B cell (primary cell): ENCODE measurements at regions of chr15 and their contacts with region 1.

Region 1: DNA sequence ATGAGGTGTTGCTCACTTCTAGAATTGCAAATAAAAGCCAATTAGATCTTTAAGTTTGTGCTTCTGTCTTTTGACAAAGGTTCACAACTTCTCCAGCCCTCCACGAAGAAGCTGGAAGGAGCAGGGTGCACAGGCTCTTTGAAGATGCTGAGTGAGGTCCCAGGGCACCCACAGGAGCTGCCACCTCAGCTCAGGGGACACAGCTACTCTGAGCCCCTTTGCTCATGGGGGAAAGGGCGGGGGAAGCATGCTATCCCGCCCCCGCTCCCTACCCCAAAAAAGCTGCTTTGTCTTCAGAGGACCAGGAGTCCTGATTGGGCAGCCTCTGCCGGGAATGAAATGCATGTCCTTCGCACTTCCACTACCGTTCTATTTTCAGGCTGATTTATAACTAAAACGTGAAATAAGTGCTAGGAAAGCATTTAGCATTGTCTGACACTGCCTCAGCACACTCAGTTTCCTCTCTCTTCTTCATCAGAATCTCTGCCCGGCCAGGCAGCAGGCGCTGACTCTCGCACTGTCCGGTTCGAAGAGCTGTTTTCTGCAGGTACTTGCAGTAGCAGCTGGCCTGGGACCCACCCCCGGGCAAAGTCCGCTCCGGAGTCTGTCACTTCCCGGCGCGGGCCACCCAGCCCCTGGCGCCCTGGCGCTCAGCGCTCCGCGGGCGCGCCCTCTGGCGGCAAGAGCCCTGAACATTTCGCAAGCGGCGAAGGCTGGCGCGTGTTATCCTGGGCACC is 45.5 kb upstream of the KLHL25 start:
- DNase-seq: peak; percentile 81
- ATAC-seq: peak; percentile 98
- H3K4me3 ChIP-seq: peak overlapping the region in 3 of 5 experiments; percentile 7 to 40 (median 25)
- H3K4me3 Mint-ChIP-seq: peak overlapping the region; percentile 74
- H3K27ac ChIP-seq: no peak overlapping the region
- H3K27ac Mint-ChIP-seq: no peak overlapping the region
- H3K4me1 ChIP-seq: peaks cover 4 to 9% of the 10 kb centered on the region in 2 donors
- H3K4me1 Mint-ChIP-seq: peaks cover 3% of the 10 kb centered on the region
- H3K27me3 ChIP-seq: peaks cover 0 to 10% (median 2%) of the 10 kb centered on the region in 4 experiments
- H3K27me3 Mint-ChIP-seq: peaks cover 12% of the 10 kb centered on the region
- CTCF ChIP-seq: peak; percentile 97

Region 2: DNA sequence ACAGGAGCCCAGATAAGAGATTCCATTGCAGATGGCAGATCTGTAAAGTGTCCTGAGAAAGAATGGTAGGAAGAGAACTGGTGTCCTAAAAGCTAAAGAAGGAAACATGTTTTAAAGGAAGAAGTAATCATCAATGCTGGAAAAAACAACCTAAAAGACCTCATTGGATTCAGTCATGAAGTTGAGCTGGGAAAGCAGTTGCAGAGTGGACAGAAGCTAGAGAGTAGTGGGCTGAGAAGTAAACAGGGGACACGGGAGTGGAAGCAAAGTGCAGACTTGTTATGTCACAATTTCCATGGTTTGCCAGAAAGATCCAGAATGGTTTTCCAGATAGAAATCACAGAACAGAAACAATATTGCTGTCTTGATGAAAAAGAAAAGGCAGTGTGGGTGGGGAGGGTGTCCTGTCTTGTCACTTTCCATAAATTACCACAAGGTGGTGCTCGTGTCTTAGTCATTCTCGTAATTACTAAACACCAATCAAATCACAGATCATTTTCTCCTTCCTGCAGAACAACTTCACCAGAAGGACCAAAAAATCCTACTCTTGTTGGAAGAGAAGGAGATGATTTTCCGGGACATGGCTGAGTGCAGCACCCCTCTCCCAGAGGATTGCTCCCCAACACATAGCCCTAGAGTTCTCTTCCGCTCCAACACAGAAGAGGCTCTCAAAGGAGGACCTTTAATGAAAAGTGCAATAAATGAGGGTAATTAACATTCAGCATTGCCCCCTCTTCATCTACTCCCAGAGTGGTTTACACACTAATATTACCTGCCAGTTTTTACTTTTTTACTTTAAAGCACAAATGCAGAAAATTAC is 110.0 kb before region 1 on chr15:
- CTCF ChIA-PET with region 1: interaction called, 114 read pairs
- POLR2A ChIA-PET with region 1: no interaction called
- intact Hi-C with region 1: loop called (anchors 1 kb)
- DNase-seq: peak; percentile 70
- ATAC-seq: peak; percentile 69
- H3K4me3 ChIP-seq: no peak overlapping the region
- H3K4me3 Mint-ChIP-seq: no peak overlapping the region
- H3K27ac ChIP-seq: peak overlapping the region in 1 of 2 donors; percentile 62
- H3K27ac Mint-ChIP-seq: peak overlapping the region; percentile 76
- H3K4me1 ChIP-seq: no peaks in the 10 kb centered on the region
- H3K4me1 Mint-ChIP-seq: peaks cover 3% of the 10 kb centered on the region
- H3K27me3 ChIP-seq: no peaks in the 10 kb centered on the region
- H3K27me3 Mint-ChIP-seq: no peaks in the 10 kb centered on the region
- CTCF ChIP-seq: peak; percentile 86

Region 3: GRCh38 chr15:85794603-85795336 is 45.5 kb before region 1 on chr15 and contains the start of gene KLHL25:
- CTCF ChIA-PET with region 1: no interaction called
- POLR2A ChIA-PET with region 1: no interaction called
- intact Hi-C with region 1: loop called (anchors 2 kb)
- DNase-seq: peak; percentile 94
- ATAC-seq: peak; percentile 98
- H3K4me3 ChIP-seq: peak within 1 kb of the TSS; percentile 47 to 79 (median 68)
- H3K4me3 Mint-ChIP-seq: peak within 1 kb of the TSS; percentile 91
- H3K27ac ChIP-seq: peak within 1 kb of the TSS in 1 of 2 donors; percentile 66
- H3K27ac Mint-ChIP-seq: peak within 1 kb of the TSS; percentile 83
- H3K4me1 ChIP-seq: peaks cover 15 to 21% of the 10 kb centered on the region in 2 donors
- H3K4me1 Mint-ChIP-seq: peaks cover 24% of the 10 kb centered on the region
- H3K27me3 ChIP-seq: peaks cover 0 to 5% (median 0%) of the 10 kb centered on the region in 4 experiments
- H3K27me3 Mint-ChIP-seq: peaks cover 4% of the 10 kb centered on the region
- CTCF ChIP-seq: no peak
- total RNA-seq, gene KLHL25: 3.3 and 3.9 TPM in 2 replicates

Region 4: DNA sequence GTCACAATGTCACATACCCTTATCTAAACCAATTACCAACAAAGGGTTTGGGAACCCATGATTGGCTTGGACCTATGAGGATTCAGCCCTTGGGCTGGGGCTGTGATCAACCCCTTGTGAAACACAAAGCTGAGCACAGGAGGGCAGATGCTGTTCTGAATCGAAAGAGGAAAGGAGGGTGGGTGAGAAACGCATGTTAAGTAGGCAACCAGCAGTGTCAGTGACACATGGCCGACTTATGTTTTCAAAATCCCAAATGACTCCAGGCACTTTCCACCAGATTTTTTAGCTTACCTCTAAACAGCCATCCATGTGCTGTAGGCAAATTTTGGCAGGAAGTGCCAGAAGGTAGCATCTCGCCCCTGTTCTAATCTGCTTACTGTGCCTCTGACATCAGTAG is 11.4 kb before region 1 on chr15:
- CTCF ChIA-PET with region 1: interaction called, 14 read pairs
- POLR2A ChIA-PET with region 1: no interaction called
- intact Hi-C with region 1: no loop called
- DNase-seq: no peak
- ATAC-seq: no peak
- H3K4me3 ChIP-seq: no peak overlapping the region
- H3K4me3 Mint-ChIP-seq: no peak overlapping the region
- H3K27ac ChIP-seq: no peak overlapping the region
- H3K27ac Mint-ChIP-seq: no peak overlapping the region
- H3K4me1 ChIP-seq: no peaks in the 10 kb centered on the region
- H3K4me1 Mint-ChIP-seq: no peaks in the 10 kb centered on the region
- H3K27me3 ChIP-seq: no peaks in the 10 kb centered on the region
- H3K27me3 Mint-ChIP-seq: peaks cover 12% of the 10 kb centered on the region
- CTCF ChIP-seq: no peak

Region 5: DNA sequence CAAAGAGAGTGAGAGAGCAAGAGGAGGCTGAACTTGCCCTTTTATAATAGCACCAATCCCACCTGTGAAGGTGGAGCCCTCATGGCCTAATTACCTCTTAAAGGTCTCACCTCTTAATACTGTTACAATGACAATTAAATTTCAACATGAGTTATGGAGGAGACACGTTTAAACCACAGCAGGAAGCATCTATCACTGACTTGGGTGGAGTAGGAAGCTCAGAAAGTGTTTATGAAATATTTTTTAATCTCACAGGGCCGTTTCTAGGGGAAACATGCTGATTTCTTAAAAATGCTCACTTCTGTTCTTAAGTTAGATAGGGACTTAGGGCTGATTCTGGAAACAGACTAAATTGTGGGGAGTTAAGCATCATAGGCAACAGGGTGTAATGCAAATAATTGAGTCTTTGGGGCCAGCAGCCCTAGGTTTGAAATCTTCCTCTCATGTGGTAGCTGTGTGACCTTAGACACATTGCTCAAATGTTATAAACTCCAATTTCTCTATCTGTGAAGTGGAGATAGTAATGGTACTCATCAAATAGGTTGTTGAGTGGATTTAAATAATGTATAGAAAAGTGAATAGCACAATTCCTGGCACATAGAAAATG is 87.8 kb after region 1 on chr15:
- CTCF ChIA-PET with region 1: no interaction called
- POLR2A ChIA-PET with region 1: no interaction called
- intact Hi-C with region 1: no loop called
- DNase-seq: no peak
- ATAC-seq: no peak
- H3K4me3 ChIP-seq: no peak overlapping the region
- H3K4me3 Mint-ChIP-seq: no peak overlapping the region
- H3K27ac ChIP-seq: no peak overlapping the region
- H3K27ac Mint-ChIP-seq: no peak overlapping the region
- H3K4me1 ChIP-seq: no peaks in the 10 kb centered on the region
- H3K4me1 Mint-ChIP-seq: no peaks in the 10 kb centered on the region
- H3K27me3 ChIP-seq: peaks cover 0 to 2% (median 0%) of the 10 kb centered on the region in 4 experiments
- H3K27me3 Mint-ChIP-seq: peaks cover 3% of the 10 kb centered on the region
- CTCF ChIP-seq: no peak